GM12878 (cell line): ENCODE measurements at regions of chr4 and their contacts with region 1.

Region 1: DNA sequence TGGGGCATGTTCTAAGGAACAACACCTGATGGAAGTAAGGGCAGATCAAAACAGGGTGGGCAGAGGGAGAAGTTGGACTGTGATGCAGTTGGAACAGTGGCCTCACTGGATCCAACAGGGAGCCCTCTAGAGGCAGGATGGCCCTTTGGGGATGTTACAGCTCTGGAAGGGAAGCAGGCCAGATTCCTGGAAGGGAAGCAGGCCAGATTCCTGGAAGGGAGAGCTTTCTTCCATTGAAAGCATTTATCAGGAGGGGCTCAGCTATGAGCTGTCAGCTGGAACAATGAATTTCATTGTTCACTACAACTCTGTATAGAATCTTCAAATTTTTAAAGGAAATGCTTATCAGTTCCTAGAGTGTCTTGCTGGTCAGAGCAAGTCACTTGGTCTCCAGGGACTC is 17.7 kb downstream of the IL15 start:
- DNase-seq: no peak
- ATAC-seq: no peak
- H3K4me3 ChIP-seq: no peak overlapping the region
- H3K27ac ChIP-seq: no peak overlapping the region
- H3K4me1 ChIP-seq: peaks cover 6% of the 10 kb centered on the region
- H3K27me3 ChIP-seq: no peaks in the 10 kb centered on the region
- CTCF ChIP-seq: peak; percentile 14 to 32 (median 30); a peak in 3 of 6 replicates
- EP300 ChIP-seq: no peak
- POLR2A ChIP-seq: no peak
- RAD21 ChIP-seq: no peak; the same call in 1 of the 2 replicates

Region 2: GRCh38 chr4:141643557-141643956 is 10.5 kb before region 1 on chr4:
- CTCF ChIA-PET with region 1: interaction called, 7 read pairs
- POLR2A ChIA-PET with region 1: interaction called, 6 read pairs
- RAD21 ChIA-PET with region 1: interaction called, 6 read pairs
- SMC1A ChIA-PET with region 1: interaction called, 13 read pairs
- in situ Hi-C with region 1: no loop called
- intact Hi-C with region 1: no loop called
- DNase-seq: no peak
- ATAC-seq: peak; percentile 66
- H3K4me3 ChIP-seq: no peak overlapping the region
- H3K27ac ChIP-seq: peak overlapping the region; percentile 27
- H3K4me1 ChIP-seq: peaks cover 3% of the 10 kb centered on the region; the same call in 1 of the 2 replicates
- H3K27me3 ChIP-seq: no peaks in the 10 kb centered on the region
- CTCF ChIP-seq: no peak
- EP300 ChIP-seq: no peak
- POLR2A ChIP-seq: no peak
- RAD21 ChIP-seq: no peak

Region 3: GRCh38 chr4:141730805-141731204 is 76.7 kb after region 1 on chr4:
- CTCF ChIA-PET with region 1: no interaction called
- POLR2A ChIA-PET with region 1: no interaction called
- RAD21 ChIA-PET with region 1: no interaction called
- SMC1A ChIA-PET with region 1: no interaction called
- in situ Hi-C with region 1: no loop called
- intact Hi-C with region 1: no loop called
- DNase-seq: no peak
- ATAC-seq: peak; percentile 58
- H3K4me3 ChIP-seq: no peak overlapping the region
- H3K27ac ChIP-seq: no peak overlapping the region
- H3K4me1 ChIP-seq: no peaks in the 10 kb centered on the region
- H3K27me3 ChIP-seq: no peaks in the 10 kb centered on the region
- CTCF ChIP-seq: no peak
- EP300 ChIP-seq: no peak
- POLR2A ChIP-seq: no peak
- RAD21 ChIP-seq: no peak